Activated naive CD4-positive, alpha-beta T cell treated with anti-CD3 and anti-CD28 coated beads for 36 hours (primary cell): ENCODE measurements at regions of chr9 and their contacts with region 1.

Region 1: GRCh38 chr9:35732122-35732799 is at the starts of genes CREB3 and TLN1:
- DNase-seq: peak; percentile 98
- H3K4me3 Mint-ChIP-seq: peak within 1 kb of the TSS; percentile 84
- H3K27ac Mint-ChIP-seq: peak within 1 kb of the TSS; percentile 90
- H3K4me1 Mint-ChIP-seq: peaks cover 16% of the 10 kb centered on the region
- H3K27me3 Mint-ChIP-seq: no peaks in the 10 kb centered on the region
- total RNA-seq, gene CREB3: 13.7 to 13.8 TPM
- total RNA-seq, gene TLN1: 190 TPM

Region 2: GRCh38 chr9:35071814-35072460 is 660.3 kb before region 1 on chr9:
- CTCF ChIA-PET with region 1: no interaction called
- intact Hi-C with region 1: loop called (anchors 1 kb)
- DNase-seq: peak; percentile 77
- H3K4me3 Mint-ChIP-seq: peak overlapping the region; percentile 92
- H3K27ac Mint-ChIP-seq: peak overlapping the region; percentile 96
- H3K4me1 Mint-ChIP-seq: peaks cover 57% of the 10 kb centered on the region
- H3K27me3 Mint-ChIP-seq: no peaks in the 10 kb centered on the region

Region 3: GRCh38 chr9:35616681-35617459 is 115.4 kb before region 1 on chr9:
- CTCF ChIA-PET with region 1: interaction called, 5 read pairs
- intact Hi-C with region 1: loop called (anchors 1 kb)
- DNase-seq: peak; percentile 79
- H3K4me3 Mint-ChIP-seq: peak overlapping the region; percentile 79
- H3K27ac Mint-ChIP-seq: peak overlapping the region; percentile 47
- H3K4me1 Mint-ChIP-seq: peaks cover 28% of the 10 kb centered on the region
- H3K27me3 Mint-ChIP-seq: no peaks in the 10 kb centered on the region

Region 4: GRCh38 chr9:35664531-35665470 is 67.5 kb before region 1 on chr9 and contains the start of gene ARHGEF39:
- CTCF ChIA-PET with region 1: interaction called, 35 read pairs
- intact Hi-C with region 1: no loop called
- DNase-seq: peak; percentile 87
- H3K4me3 Mint-ChIP-seq: peak within 1 kb of the TSS; percentile 82
- H3K27ac Mint-ChIP-seq: peak within 1 kb of the TSS; percentile 67
- H3K4me1 Mint-ChIP-seq: peaks cover 49% of the 10 kb centered on the region
- H3K27me3 Mint-ChIP-seq: no peaks in the 10 kb centered on the region
- total RNA-seq, gene ARHGEF39: 28.9 to 30.4 TPM

Region 5: GRCh38 chr9:35748858-35749514 is 16.7 kb after region 1 on chr9 and contains the starts of genes GBA2 and RGP1:
- CTCF ChIA-PET with region 1: interaction called, 59 read pairs
- intact Hi-C with region 1: loop called (anchors 1 kb)
- DNase-seq: peak; percentile 67
- H3K4me3 Mint-ChIP-seq: peak within 1 kb of the TSS; percentile 89
- H3K27ac Mint-ChIP-seq: peak within 1 kb of the TSS; percentile 88
- H3K4me1 Mint-ChIP-seq: peaks cover 32% of the 10 kb centered on the region
- H3K27me3 Mint-ChIP-seq: no peaks in the 10 kb centered on the region
- total RNA-seq, gene GBA2: 20.3 to 22.7 TPM
- total RNA-seq, gene RGP1: 12.0 to 13.3 TPM

Region 6: GRCh38 chr9:35829084-35829763 is 97.0 kb after region 1 on chr9 and contains the start of gene TMEM8B:
- CTCF ChIA-PET with region 1: interaction called, 9 read pairs
- intact Hi-C with region 1: loop called (anchors 1 kb)
- DNase-seq: peak; percentile 96
- H3K4me3 Mint-ChIP-seq: peak within 1 kb of the TSS; percentile 89
- H3K27ac Mint-ChIP-seq: peak within 1 kb of the TSS; percentile 59
- H3K4me1 Mint-ChIP-seq: peaks cover 24% of the 10 kb centered on the region
- H3K27me3 Mint-ChIP-seq: peaks cover 2% of the 10 kb centered on the region
- total RNA-seq, gene TMEM8B: 6.2 to 6.6 TPM